Activated CD4-positive, alpha-beta memory T cell treated with anti-CD3 and anti-CD28 coated beads, Interleukin-2, amount 10 ng/mL, durations not matched to agents 7 days and 5 days (primary cell): ENCODE measurements at regions of chr5 and their contacts with region 1.

Region 1: GRCh38 chr5:36739751-36740221 is 133.4 kb downstream of the SLC1A3 start:
- DNase-seq: peak; percentile 74
- H3K4me3 Mint-ChIP-seq: no peak overlapping the region
- H3K27ac Mint-ChIP-seq: no peak overlapping the region
- H3K4me1 Mint-ChIP-seq: peaks cover 9% of the 10 kb centered on the region
- H3K27me3 Mint-ChIP-seq: peaks cover 26% of the 10 kb centered on the region

Region 2: GRCh38 chr5:36728697-36729543 is 10.9 kb before region 1 on chr5:
- CTCF ChIA-PET with region 1: interaction called, 15 read pairs
- POLR2A ChIA-PET with region 1: no interaction called
- DNase-seq: no peak
- H3K4me3 Mint-ChIP-seq: no peak overlapping the region
- H3K27ac Mint-ChIP-seq: no peak overlapping the region
- H3K4me1 Mint-ChIP-seq: peaks cover 2% of the 10 kb centered on the region
- H3K27me3 Mint-ChIP-seq: peaks cover 4% of the 10 kb centered on the region

Region 3: DNA sequence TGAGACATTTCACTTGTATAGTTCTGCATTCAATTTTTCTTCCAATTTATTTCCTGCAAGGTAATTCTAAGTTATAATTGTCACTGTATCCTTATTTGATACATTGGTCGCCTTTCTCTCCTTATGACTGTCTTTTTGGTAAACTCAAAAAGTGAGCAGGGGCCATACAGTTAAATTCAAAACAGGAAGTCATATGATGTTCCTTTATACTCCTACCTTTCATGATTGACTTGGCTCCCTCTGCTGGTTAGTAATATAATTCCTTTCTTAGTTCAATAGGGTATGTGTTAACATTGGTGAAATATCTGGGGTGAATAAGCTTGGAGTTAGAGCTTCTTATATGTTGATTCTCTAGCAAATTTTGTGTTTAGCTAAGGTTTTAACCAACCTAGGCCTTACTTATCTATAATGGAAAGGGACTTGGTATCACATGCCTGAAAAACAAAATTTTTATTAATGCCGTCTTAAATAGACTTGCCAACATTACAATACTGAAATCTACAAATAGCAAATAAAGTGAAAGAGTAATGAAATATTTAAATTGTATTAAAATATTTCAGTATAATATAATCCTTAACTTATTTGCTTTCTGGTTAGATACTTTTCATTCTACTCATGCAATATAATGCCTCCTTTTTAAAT is 130.7 kb after region 1 on chr5:
- CTCF ChIA-PET with region 1: interaction called, 20 read pairs
- POLR2A ChIA-PET with region 1: interaction called, 4 read pairs
- DNase-seq: no peak
- H3K4me3 Mint-ChIP-seq: no peak overlapping the region
- H3K27ac Mint-ChIP-seq: no peak overlapping the region
- H3K4me1 Mint-ChIP-seq: peaks cover 34% of the 10 kb centered on the region
- H3K27me3 Mint-ChIP-seq: no peaks in the 10 kb centered on the region